Activated CD4-positive, alpha-beta T cell treated with anti-CD3 and anti-CD28 coated beads, Interleukin-2, amount 10 ng/mL, durations not matched to agents 7 days and 5 days (primary cell): ENCODE measurements at regions of chr1 and their contacts with region 1.

Region 1: DNA sequence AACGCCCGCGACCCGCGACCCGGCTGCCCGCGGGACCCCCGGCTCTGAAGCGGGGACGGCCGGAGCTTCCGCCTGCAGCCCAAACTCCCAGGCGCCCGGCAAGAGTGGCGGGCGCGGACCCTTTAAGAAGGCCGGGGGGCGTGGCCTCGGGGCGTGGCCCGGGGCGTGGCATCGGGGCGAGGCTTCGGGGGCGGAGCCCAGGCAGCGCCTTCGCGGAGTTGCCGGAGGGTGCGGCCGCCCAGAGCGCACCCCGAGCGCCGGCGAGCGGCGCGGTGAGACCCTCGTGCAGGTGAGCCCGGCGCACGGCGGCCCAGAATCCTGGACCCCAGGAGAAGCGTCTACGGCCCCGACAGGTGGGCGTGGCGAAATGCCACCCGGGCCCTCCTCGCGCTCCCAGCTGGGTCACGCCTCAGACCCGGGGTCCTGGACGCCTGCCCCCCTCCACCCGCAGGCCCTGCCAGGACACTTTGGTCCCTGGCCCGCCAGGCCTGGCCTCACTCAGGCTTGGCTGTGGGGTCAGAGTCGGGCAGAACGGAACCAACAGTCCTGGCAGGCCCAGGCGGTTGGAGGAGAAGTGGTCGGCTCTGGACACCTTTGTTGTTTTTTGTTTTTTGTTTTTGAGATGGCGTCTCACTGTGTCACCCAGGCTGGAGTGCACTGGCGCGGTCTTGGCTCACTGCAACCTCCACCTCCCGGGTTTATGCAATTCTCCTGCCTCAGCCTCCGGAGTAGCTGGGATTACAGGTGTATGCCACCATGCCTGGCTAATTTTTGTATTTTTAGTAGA is 14.4 kb downstream of the RNF223 start:
- DNase-seq: peak; percentile 92
- H3K4me3 Mint-ChIP-seq: peak overlapping the region; percentile 70
- H3K27ac Mint-ChIP-seq: peak overlapping the region; percentile 36
- H3K4me1 Mint-ChIP-seq: peaks cover 34% of the 10 kb centered on the region
- H3K27me3 Mint-ChIP-seq: peaks cover 17% of the 10 kb centered on the region

Region 2: GRCh38 chr1:1033009-1033587 is 26.6 kb before region 1 on chr1:
- CTCF ChIA-PET with region 1: interaction called, 39 read pairs
- POLR2A ChIA-PET with region 1: no interaction called
- DNase-seq: peak; percentile 87
- H3K4me3 Mint-ChIP-seq: no peak overlapping the region
- H3K27ac Mint-ChIP-seq: no peak overlapping the region
- H3K4me1 Mint-ChIP-seq: peaks cover 5% of the 10 kb centered on the region
- H3K27me3 Mint-ChIP-seq: peaks cover 21% of the 10 kb centered on the region

Region 3: DNA sequence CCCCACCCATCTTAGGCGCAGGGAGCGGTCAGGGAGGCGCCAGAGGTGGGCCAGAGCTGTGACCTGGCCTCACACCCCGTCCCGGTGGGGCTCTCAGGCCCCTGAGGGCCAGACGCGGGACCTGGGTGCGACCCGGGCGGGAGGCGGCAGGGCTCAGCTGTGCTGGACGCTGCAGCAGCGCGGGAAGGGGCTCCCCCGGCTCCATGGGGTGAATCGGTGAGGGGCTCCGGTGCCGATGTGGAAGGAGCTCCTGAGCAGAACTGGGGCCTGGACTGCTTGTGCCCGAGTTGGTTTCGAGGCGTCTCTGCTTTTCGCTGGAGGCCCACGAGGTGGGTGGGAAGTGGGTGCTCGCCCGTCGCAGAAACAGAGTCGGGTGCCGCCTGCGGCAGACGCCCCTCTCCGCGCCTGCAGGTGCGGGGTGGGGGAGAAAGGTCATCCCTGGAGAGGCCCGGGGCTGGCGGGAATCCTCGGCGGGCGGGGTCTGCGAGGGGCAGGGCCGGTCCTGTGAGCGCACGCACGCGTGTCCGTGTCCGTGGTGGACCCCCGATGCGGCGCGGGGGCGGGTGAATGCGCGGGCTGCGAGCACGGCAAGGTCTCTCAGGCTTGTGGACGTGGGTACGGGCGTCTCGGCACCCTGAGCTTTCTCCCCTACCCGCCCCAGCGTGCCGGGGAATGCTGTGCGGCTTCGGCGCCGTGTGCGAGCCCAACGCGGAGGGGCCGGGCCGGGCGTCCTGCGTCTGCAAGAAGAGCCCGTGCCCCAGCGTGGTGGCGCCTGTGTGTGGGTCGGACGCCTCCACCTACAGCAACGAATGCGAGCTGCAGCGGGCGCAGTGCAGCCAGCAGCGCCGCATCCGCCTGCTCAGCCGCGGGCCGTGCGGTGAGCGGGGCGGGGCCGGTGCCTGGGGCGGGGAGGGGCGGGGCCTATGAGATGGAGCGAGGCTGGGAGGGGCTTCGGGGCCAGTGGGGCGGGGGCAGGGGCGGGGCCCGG is 19.4 kb before region 1 on chr1:
- CTCF ChIA-PET with region 1: interaction called, 39 read pairs
- POLR2A ChIA-PET with region 1: interaction called, 3 read pairs
- DNase-seq: peak; percentile 86
- H3K4me3 Mint-ChIP-seq: peak overlapping the region; percentile 62
- H3K27ac Mint-ChIP-seq: peak overlapping the region; percentile 73
- H3K4me1 Mint-ChIP-seq: peaks cover 12% of the 10 kb centered on the region
- H3K27me3 Mint-ChIP-seq: peaks cover 27% of the 10 kb centered on the region

Region 4: GRCh38 chr1:1185101-1185765 is 125.5 kb after region 1 on chr1:
- CTCF ChIA-PET with region 1: no interaction called
- POLR2A ChIA-PET with region 1: no interaction called
- DNase-seq: no peak
- H3K4me3 Mint-ChIP-seq: no peak overlapping the region
- H3K27ac Mint-ChIP-seq: no peak overlapping the region
- H3K4me1 Mint-ChIP-seq: peaks cover 5% of the 10 kb centered on the region
- H3K27me3 Mint-ChIP-seq: peaks cover 17% of the 10 kb centered on the region